ENCODE measurements at regions of chr9 and their contacts with region 1.

Region 1: DNA sequence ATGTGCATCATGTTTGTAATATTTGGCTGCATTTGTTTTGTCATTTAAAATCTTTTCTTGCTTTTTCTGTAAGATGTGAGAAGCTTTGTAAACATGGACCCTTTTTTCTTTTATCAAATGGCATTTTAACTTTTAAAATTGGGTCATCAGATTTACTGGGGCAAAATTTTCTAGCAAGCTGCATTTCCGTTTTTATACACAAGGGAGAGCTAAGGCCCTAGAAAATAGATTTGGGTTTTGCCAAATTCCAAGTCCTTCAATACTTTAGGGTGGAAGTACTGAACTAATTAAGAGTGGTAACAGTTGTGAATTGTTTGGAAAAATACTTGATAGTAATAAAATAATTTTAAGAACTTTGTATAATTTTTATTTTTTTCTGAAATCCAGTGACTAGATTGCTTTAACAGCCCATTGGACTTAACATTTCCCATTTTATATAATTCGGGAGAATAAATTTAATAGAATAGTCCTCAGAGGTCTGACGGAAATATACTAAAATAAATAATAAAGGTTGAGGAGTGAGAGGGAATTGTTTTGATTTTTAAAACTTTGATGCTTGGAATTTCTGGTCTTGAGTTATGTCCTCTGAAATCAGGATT is 117.4 kb downstream of the SMARCA2 start:
- H3K4me3 ChIP-seq: no peak overlapping the region
- H3K27ac ChIP-seq: no peak overlapping the region
- H3K4me1 ChIP-seq: no peaks in the 10 kb centered on the region
- CTCF ChIP-seq: no peak

Region 2: DNA sequence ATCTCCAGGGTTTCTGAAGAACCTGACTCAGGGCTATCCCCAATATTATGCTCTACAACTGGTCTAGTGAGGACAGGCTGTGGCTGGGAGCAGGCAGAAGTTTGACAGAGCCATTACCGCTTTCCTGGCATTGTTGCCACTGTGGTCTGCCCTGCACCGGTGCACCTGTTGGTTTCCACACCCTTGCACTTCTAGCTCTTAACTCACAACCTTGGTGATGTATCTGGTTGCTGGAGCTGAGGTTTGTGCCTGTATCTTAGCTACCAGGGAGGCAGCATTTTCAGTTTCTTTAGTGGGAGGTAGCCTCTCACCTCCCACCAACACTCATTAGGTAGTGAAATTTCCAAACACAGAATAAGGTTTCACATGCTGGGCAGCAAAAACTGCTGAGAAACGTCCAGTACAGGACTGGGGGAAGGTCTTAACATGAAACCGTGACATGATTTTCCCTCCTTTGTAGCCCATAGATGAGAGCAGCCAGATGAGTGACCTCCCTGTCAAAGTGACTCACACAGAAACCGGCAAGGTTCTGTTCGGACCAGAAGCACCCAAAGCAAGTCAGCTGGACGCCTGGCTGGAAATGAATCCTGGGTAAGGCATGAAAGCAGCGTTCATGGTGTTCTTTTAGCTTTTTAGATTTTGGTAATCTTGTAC is 59.7 kb before region 1 on chr9:
- CTCF ChIA-PET with region 1: no interaction called
- POLR2A ChIA-PET with region 1: no interaction called
- H3K4me3 ChIP-seq: no peak overlapping the region
- H3K27ac ChIP-seq: no peak overlapping the region
- H3K4me1 ChIP-seq: no peaks in the 10 kb centered on the region
- CTCF ChIP-seq: no peak

Region 3: GRCh38 chr9:2120926-2121689 is 11.5 kb before region 1 on chr9:
- CTCF ChIA-PET with region 1: interaction called, 11 read pairs
- POLR2A ChIA-PET with region 1: interaction called, 3 read pairs
- H3K4me3 ChIP-seq: no peak overlapping the region
- H3K27ac ChIP-seq: no peak overlapping the region
- H3K4me1 ChIP-seq: no peaks in the 10 kb centered on the region
- CTCF ChIP-seq: no peak

Region 4: GRCh38 chr9:2170712-2171111 is 38.1 kb after region 1 on chr9:
- CTCF ChIA-PET with region 1: no interaction called
- POLR2A ChIA-PET with region 1: no interaction called
- H3K4me3 ChIP-seq: no peak overlapping the region
- H3K27ac ChIP-seq: no peak overlapping the region
- H3K4me1 ChIP-seq: no peaks in the 10 kb centered on the region; the same call in 1 of the 2 replicates
- CTCF ChIP-seq: no peak

Region 5: DNA sequence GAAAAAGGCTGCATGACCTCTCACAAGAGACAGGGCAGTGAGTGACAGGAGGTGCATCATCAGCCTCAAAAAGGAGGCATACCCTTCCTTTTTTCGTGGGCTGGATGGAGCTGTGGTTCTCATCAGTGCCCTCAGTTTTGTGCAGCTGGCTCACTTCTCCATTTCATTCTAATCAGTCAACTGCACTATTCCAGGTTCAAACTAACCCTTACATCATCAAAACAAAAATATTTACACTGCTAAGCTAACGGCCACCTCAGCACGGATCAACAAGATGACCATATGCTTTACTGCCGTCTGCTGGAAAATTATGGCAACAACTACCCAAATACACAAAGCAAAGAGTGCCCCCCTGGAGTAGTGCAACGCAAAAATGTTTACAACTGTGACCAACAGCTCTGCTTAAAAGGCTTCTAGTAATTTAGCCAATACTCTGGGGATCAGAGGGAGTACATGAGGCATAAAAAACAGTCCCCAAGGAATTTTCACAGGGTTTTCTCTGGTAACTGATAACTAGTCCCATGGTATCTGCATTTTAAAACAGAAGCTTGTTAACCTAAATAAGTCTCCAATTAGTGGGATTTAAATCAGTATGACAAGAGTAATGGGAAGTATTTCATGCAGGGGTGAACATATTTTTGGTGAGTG is 595.5 kb after region 1 on chr9:
- CTCF ChIA-PET with region 1: interaction called, 14 read pairs
- POLR2A ChIA-PET with region 1: no interaction called
- H3K4me3 ChIP-seq: no peak overlapping the region
- H3K27ac ChIP-seq: no peak overlapping the region
- H3K4me1 ChIP-seq: peaks cover 4% of the 10 kb centered on the region; the same call in 1 of the 2 replicates
- CTCF ChIP-seq: peak; percentile 81